Naive thymus-derived CD4-positive, alpha-beta T cell (primary cell): ENCODE measurements at regions of chr14 and their contacts with region 1.

Region 1: GRCh38 chr14:61761959-61762786 is at the start of gene SNAPC1:
- DNase-seq: peak; percentile 92 to 98 (median 96)
- ATAC-seq: peak; percentile 97
- H3K4me3 ChIP-seq: peak within 1 kb of the TSS; percentile 94
- H3K4me3 Mint-ChIP-seq: peak within 1 kb of the TSS; percentile 96 to 100 (median 98)
- H3K27ac ChIP-seq: peak within 1 kb of the TSS; percentile 95
- H3K27ac Mint-ChIP-seq: peak within 1 kb of the TSS; percentile 98 to 100 (median 99)
- H3K4me1 ChIP-seq: peaks cover 13 to 17% of the 10 kb centered on the region in 2 donors
- H3K4me1 Mint-ChIP-seq: peaks cover 27 to 62% (median 53%) of the 10 kb centered on the region in 7 donors
- H3K27me3 ChIP-seq: no peaks in the 10 kb centered on the region
- H3K27me3 Mint-ChIP-seq: peaks cover 0 to 4% (median 0%) of the 10 kb centered on the region in 5 donors
- total RNA-seq, gene SNAPC1: 3.5 to 8.7 (median 5.1) TPM

Region 2: DNA sequence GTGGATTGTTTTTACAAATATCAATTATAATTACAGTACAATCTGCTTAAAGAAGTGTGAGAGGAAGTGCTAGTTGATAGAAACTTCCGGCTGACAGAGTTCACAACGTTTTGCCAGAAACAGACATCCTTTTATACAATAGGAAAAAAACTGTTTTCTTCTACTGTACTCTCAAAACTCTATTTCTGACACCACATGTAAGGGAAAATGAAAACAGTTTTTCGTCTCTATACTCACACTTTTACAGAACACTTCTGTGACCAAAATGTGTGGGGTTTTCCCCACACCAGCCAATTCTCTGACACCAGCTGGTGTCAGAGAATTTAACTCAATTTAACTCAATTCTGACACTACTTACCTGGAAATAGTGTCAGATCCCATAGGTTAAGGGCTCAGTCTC is 91.1 kb before region 1 on chr14:
- CTCF ChIA-PET with region 1: no interaction called
- POLR2A ChIA-PET with region 1: no interaction called
- intact Hi-C with region 1: loop called in 1 of 2 experiments (anchors 1 kb)
- DNase-seq: peak in 7 of 9 donors; percentile 67 to 87 (median 82)
- ATAC-seq: peak; percentile 97
- H3K4me3 ChIP-seq: peak overlapping the region; percentile 24
- H3K4me3 Mint-ChIP-seq: peak overlapping the region in 1 of 10 donors; percentile 68
- H3K27ac ChIP-seq: peak overlapping the region; percentile 85
- H3K27ac Mint-ChIP-seq: no peak overlapping the region
- H3K4me1 ChIP-seq: peaks cover 29 to 66% of the 10 kb centered on the region in 2 donors
- H3K4me1 Mint-ChIP-seq: peaks cover 5 to 23% (median 18%) of the 10 kb centered on the region in 7 donors
- H3K27me3 ChIP-seq: no peaks in the 10 kb centered on the region
- H3K27me3 Mint-ChIP-seq: no peaks in the 10 kb centered on the region

Region 3: GRCh38 chr14:61742371-61742770 is 19.8 kb before region 1 on chr14:
- CTCF ChIA-PET with region 1: interaction called, 5 read pairs
- POLR2A ChIA-PET with region 1: interaction called, 12 read pairs
- intact Hi-C with region 1: no loop called
- DNase-seq: no peak
- ATAC-seq: peak; percentile 31
- H3K4me3 ChIP-seq: no peak overlapping the region
- H3K4me3 Mint-ChIP-seq: no peak overlapping the region
- H3K27ac ChIP-seq: no peak overlapping the region
- H3K27ac Mint-ChIP-seq: peak overlapping the region in 4 of 9 donors; percentile 9 to 51 (median 50)
- H3K4me1 ChIP-seq: no peaks in the 10 kb centered on the region
- H3K4me1 Mint-ChIP-seq: peaks cover 0 to 52% (median 0%) of the 10 kb centered on the region in 7 donors
- H3K27me3 ChIP-seq: no peaks in the 10 kb centered on the region
- H3K27me3 Mint-ChIP-seq: no peaks in the 10 kb centered on the region

Region 4: DNA sequence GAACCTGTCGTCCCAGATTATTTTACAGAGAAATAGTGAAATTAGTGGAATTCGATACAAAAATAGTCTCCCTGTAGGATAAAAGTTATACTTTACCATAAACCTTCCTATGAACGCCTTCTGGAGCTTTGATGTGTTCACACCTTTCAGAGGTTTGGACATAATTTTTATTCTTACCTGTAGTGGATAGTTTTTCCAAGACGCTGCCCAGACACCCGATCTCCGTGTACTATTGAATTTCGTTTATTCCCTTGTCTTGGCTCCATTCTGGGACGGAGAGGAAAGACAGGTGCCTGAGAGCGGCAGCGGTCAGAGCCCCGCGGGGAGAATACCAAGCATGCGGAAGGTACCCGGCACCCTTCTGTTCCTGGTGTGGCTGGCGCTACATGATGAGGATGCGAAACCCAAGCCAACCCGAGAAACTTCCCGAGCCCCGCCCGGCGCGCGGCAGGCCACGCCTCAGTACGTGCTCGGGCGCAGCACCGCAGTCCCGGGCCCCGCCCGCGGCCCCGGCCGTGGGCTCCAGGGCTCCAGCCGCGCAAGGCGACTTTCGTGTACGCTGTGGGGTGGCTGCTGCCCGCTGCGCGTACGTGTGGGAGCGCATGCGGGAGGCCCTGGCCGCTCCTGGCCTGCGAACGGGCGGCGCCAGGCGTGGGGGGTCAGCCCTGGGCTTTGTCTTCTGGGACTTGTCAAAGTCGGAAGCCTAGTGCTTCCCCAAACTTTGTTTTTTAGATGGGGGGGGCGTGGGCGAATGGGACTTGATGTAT is 11.3 kb before region 1 on chr14:
- CTCF ChIA-PET with region 1: interaction called, 5 read pairs
- POLR2A ChIA-PET with region 1: interaction called, 30 read pairs
- intact Hi-C with region 1: loop called (anchors 1 kb)
- DNase-seq: peak; percentile 53 to 89 (median 66)
- ATAC-seq: peak; percentile 92
- H3K4me3 ChIP-seq: peak overlapping the region; percentile 55
- H3K4me3 Mint-ChIP-seq: peak overlapping the region; percentile 75 to 94 (median 85)
- H3K27ac ChIP-seq: peak overlapping the region; percentile 75
- H3K27ac Mint-ChIP-seq: peak overlapping the region; percentile 26 to 88 (median 70)
- H3K4me1 ChIP-seq: no peaks in the 10 kb centered on the region
- H3K4me1 Mint-ChIP-seq: peaks cover 4 to 63% (median 11%) of the 10 kb centered on the region in 7 donors
- H3K27me3 ChIP-seq: no peaks in the 10 kb centered on the region
- H3K27me3 Mint-ChIP-seq: peaks cover 0 to 8% (median 1%) of the 10 kb centered on the region in 5 donors

Region 5: GRCh38 chr14:61780125-61780524 is 18.0 kb after region 1 on chr14:
- CTCF ChIA-PET with region 1: no interaction called
- POLR2A ChIA-PET with region 1: interaction called, 8 read pairs
- intact Hi-C with region 1: loop called (anchors 1 to 2 kb)
- DNase-seq: peak in 7 of 9 donors; percentile 20 to 62 (median 52)
- ATAC-seq: peak; percentile 46
- H3K4me3 ChIP-seq: no peak overlapping the region
- H3K4me3 Mint-ChIP-seq: peak overlapping the region; percentile 51 to 84 (median 76)
- H3K27ac ChIP-seq: peak overlapping the region; percentile 65
- H3K27ac Mint-ChIP-seq: peak overlapping the region; percentile 61 to 96 (median 92)
- H3K4me1 ChIP-seq: peaks cover 0 to 18% of the 10 kb centered on the region in 2 donors
- H3K4me1 Mint-ChIP-seq: peaks cover 14 to 50% (median 45%) of the 10 kb centered on the region in 7 donors
- H3K27me3 ChIP-seq: no peaks in the 10 kb centered on the region
- H3K27me3 Mint-ChIP-seq: no peaks in the 10 kb centered on the region